PC-9 (cell line): ENCODE measurements at regions of chr18 and their contacts with region 1.

Region 1: DNA sequence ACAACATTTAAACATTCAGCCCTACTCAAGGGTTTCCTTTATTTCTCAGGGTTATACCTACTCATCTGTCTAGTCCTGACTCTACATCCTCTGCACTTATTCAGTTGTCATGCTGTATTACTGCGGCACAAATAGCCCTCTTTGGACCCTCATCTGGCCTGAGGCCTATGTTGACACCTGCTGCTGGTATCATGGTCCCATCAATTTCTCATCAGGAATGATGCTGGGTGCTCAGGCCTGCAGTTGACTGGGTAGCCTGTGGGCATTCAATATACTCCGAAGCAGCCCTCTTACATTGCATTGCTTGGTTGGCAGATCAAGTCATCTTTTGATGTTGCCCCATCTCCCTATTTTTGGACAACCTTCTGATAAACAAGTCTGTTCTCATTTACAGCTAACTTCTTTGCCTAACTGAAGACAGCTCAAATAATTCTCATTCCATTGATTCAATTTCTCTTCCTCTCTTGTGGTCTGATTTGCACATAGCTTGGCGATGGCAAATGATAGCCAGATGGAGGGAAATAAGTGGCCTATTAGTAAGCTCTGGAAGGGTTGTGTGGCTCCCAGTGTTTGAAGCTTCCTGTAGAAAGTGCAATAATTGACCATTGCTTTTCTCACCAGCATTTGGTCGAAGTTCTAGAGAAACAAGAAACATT is 19.1 kb upstream of the MC4R start:
- DNase-seq: no peak
- H3K4me3 ChIP-seq: no peak overlapping the region
- H3K27ac ChIP-seq: no peak overlapping the region
- H3K4me1 ChIP-seq: no peaks in the 10 kb centered on the region
- H3K27me3 ChIP-seq: no peaks in the 10 kb centered on the region
- CTCF ChIP-seq: no peak

Region 2: GRCh38 chr18:59646228-59646962 is 745.3 kb before region 1 on chr18:
- CTCF ChIA-PET with region 1: no interaction called
- POLR2A ChIA-PET with region 1: interaction called, 13 read pairs
- intact Hi-C with region 1: no loop called
- DNase-seq: no peak
- H3K4me3 ChIP-seq: no peak overlapping the region
- H3K27ac ChIP-seq: no peak overlapping the region
- H3K4me1 ChIP-seq: no peaks in the 10 kb centered on the region
- H3K27me3 ChIP-seq: no peaks in the 10 kb centered on the region
- CTCF ChIP-seq: no peak

Region 3: GRCh38 chr18:60358516-60358915 is 33.2 kb before region 1 on chr18:
- CTCF ChIA-PET with region 1: no interaction called
- POLR2A ChIA-PET with region 1: no interaction called
- intact Hi-C with region 1: no loop called
- DNase-seq: peak in 1 of 2 experiments; percentile 44
- H3K4me3 ChIP-seq: no peak overlapping the region
- H3K27ac ChIP-seq: no peak overlapping the region
- H3K4me1 ChIP-seq: peaks cover 7% of the 10 kb centered on the region; the same call in 1 of the 2 replicates
- H3K27me3 ChIP-seq: no peaks in the 10 kb centered on the region
- CTCF ChIP-seq: no peak